Calu3 (cell line): ENCODE measurements at regions of chr2 and their contacts with region 1.

Region 1: GRCh38 chr2:109510136-109511028 is 103.4 kb downstream of the SEPTIN10 start:
- DNase-seq: peak; percentile 79
- H3K4me3 Mint-ChIP-seq: no peak overlapping the region
- H3K27ac Mint-ChIP-seq: no peak overlapping the region
- H3K4me1 Mint-ChIP-seq: no peaks in the 10 kb centered on the region
- H3K27me3 Mint-ChIP-seq: peaks cover 59% of the 10 kb centered on the region
- CTCF ChIP-seq: peak; percentile 70

Region 2: GRCh38 chr2:108786354-108787199 is 723.8 kb before region 1 on chr2 and contains the start of gene CCDC138:
- CTCF ChIA-PET with region 1: no interaction called
- intact Hi-C with region 1: no loop called
- DNase-seq: peak; percentile 94
- H3K4me3 Mint-ChIP-seq: peak within 1 kb of the TSS; percentile 85
- H3K27ac Mint-ChIP-seq: peak within 1 kb of the TSS; percentile 56
- H3K4me1 Mint-ChIP-seq: no peaks in the 10 kb centered on the region
- H3K27me3 Mint-ChIP-seq: no peaks in the 10 kb centered on the region
- CTCF ChIP-seq: no peak
- total RNA-seq, gene CCDC138: 11.3 and 12.0 TPM in 2 replicates

Region 3: GRCh38 chr2:109322111-109322510 is 188.3 kb before region 1 on chr2:
- CTCF ChIA-PET with region 1: no interaction called
- intact Hi-C with region 1: loop called (anchors 5 kb)
- DNase-seq: no peak
- H3K4me3 Mint-ChIP-seq: no peak overlapping the region
- H3K27ac Mint-ChIP-seq: no peak overlapping the region
- H3K4me1 Mint-ChIP-seq: no peaks in the 10 kb centered on the region
- H3K27me3 Mint-ChIP-seq: peaks cover 100% of the 10 kb centered on the region
- CTCF ChIP-seq: no peak

Region 4: GRCh38 chr2:109410039-109410815 is 100.2 kb before region 1 on chr2:
- CTCF ChIA-PET with region 1: no interaction called
- intact Hi-C with region 1: no loop called
- DNase-seq: no peak
- H3K4me3 Mint-ChIP-seq: no peak overlapping the region
- H3K27ac Mint-ChIP-seq: no peak overlapping the region
- H3K4me1 Mint-ChIP-seq: no peaks in the 10 kb centered on the region
- H3K27me3 Mint-ChIP-seq: peaks cover 81% of the 10 kb centered on the region
- CTCF ChIP-seq: no peak

Region 5: GRCh38 chr2:109457794-109458193 is 52.6 kb before region 1 on chr2:
- CTCF ChIA-PET with region 1: no interaction called
- intact Hi-C with region 1: no loop called
- DNase-seq: no peak
- H3K4me3 Mint-ChIP-seq: no peak overlapping the region
- H3K27ac Mint-ChIP-seq: no peak overlapping the region
- H3K4me1 Mint-ChIP-seq: no peaks in the 10 kb centered on the region
- H3K27me3 Mint-ChIP-seq: peaks cover 94% of the 10 kb centered on the region
- CTCF ChIP-seq: no peak